ENCODE measurements at regions of chr1 and their contacts with region 1.

Region 1: DNA sequence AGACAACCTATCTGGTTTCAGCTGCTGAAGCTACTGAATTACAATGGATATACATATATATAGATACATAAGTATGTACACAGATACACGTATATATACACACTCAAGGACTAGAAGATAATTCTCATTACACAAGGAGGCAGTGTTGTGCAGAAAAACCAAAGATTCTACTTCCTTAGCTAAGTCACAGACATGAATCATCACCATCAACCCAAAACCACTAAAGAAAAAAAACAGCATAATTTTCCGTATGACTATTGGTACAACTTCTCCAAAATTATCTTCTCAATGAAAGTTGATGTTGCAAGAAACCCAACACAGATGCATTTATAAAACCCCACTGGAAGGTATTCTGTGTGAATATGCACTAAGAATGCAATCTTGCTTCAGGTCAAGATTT is 36.8 kb upstream of the RPF1 start:
- DNase-seq: no peak
- H3K4me3 Mint-ChIP-seq: no peak overlapping the region
- H3K27ac Mint-ChIP-seq: no peak overlapping the region
- H3K4me1 Mint-ChIP-seq: peaks cover 7% of the 10 kb centered on the region
- H3K27me3 Mint-ChIP-seq: peaks cover 12% of the 10 kb centered on the region

Region 2: DNA sequence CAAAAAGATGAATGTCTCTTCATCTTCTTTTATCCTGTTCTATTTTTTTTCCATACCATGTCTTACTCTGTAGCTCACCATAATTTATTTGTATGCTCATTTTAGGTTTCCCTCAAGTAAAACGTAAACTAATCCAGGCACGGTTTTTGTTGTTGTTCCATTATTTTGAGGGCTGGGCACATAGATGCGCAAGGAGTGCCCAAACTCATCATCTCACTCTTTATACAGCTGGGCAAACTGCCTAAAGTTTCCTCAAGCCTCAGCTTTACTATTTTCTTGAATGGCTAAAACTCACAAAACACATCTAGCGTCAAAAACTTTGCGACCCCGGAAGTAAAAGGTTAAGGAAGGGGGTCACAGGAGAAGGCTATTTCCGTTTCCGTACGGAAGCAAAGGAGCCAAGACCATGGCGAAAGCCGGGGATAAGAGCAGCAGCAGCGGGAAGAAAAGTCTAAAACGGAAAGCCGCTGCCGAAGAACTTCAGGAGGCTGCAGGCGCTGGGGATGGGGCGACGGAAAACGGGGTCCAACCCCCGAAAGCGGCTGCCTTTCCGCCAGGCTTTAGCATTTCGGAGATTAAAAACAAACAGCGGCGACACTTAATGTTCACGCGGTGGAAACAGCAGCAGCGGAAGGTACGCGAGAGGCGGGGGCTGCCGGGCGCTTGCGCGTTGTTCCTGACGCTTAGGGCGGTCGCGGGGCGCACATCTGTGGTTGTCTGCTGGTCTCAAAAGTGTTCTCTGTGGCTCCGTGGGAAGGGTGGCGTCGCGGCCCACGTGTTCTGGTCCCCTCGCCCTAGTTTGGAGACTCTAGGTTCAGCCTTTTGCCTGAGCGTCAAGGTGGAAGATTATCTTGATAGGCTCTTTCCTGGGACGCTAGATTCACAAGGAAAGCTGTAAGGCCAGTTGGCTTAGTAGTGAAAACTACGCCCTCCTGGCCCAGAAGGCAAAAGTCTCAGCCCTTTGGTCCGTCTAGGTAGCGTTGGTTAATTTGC is 36.9 kb after region 1 on chr1 and contains the start of gene RPF1:
- intact Hi-C with region 1: loop called (anchors 1 kb)
- DNase-seq: peak; percentile 71
- H3K4me3 Mint-ChIP-seq: peak within 1 kb of the TSS; percentile 99
- H3K27ac Mint-ChIP-seq: peak within 1 kb of the TSS; percentile 99
- H3K4me1 Mint-ChIP-seq: peaks cover 26% of the 10 kb centered on the region
- H3K27me3 Mint-ChIP-seq: peaks cover 26% of the 10 kb centered on the region
- total RNA-seq, gene RPF1: 58.9 and 62.7 TPM in 2 replicates

Region 3: GRCh38 chr1:84541679-84542078 is 99.4 kb after region 1 on chr1:
- intact Hi-C with region 1: loop called (anchors 2 kb)
- DNase-seq: no peak
- H3K4me3 Mint-ChIP-seq: no peak overlapping the region
- H3K27ac Mint-ChIP-seq: no peak overlapping the region
- H3K4me1 Mint-ChIP-seq: peaks cover 27% of the 10 kb centered on the region
- H3K27me3 Mint-ChIP-seq: no peaks in the 10 kb centered on the region

Region 4: GRCh38 chr1:84690397-84691121 is 248.3 kb after region 1 on chr1 and contains the start of gene SSX2IP:
- intact Hi-C with region 1: loop called (anchors 1 kb)
- DNase-seq: peak; percentile 98
- H3K4me3 Mint-ChIP-seq: peak within 1 kb of the TSS; percentile 94
- H3K27ac Mint-ChIP-seq: peak within 1 kb of the TSS; percentile 94
- H3K4me1 Mint-ChIP-seq: peaks cover 46% of the 10 kb centered on the region
- H3K27me3 Mint-ChIP-seq: no peaks in the 10 kb centered on the region
- total RNA-seq, gene SSX2IP: 12.1 and 13.0 TPM in 2 replicates

Region 5: DNA sequence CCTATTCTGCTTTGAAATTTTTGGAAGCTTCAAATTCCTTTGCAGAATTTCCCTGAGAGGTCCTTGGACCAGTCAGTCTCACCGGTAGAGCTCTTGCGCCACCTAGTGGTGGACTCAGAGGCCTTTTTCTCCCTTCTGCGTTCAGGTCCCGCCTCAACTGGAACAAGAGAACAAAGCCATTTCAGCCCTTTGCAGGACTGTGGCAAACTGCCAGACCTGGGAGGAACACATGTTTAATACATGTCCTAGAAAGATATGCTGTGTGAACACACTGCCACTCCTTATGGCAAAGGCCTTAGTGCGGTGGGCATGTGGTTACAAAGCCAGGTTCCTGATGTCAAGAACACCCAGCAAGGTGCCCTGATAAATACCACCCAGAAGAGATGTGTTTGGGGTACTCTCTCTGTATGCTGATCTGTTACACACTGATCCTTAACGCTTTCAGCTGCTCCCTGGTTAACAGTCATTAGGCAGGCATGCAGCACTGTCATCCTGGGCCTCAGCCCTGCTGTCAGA is 330.2 kb after region 1 on chr1:
- intact Hi-C with region 1: loop called (anchors 1 kb)
- DNase-seq: peak; percentile 30
- H3K4me3 Mint-ChIP-seq: no peak overlapping the region
- H3K27ac Mint-ChIP-seq: no peak overlapping the region
- H3K4me1 Mint-ChIP-seq: no peaks in the 10 kb centered on the region
- H3K27me3 Mint-ChIP-seq: peaks cover 24% of the 10 kb centered on the region

Region 6: GRCh38 chr1:85116856-85117255 is 674.6 kb after region 1 on chr1:
- intact Hi-C with region 1: no loop called
- DNase-seq: no peak
- H3K4me3 Mint-ChIP-seq: no peak overlapping the region
- H3K27ac Mint-ChIP-seq: no peak overlapping the region
- H3K4me1 Mint-ChIP-seq: peaks cover 5% of the 10 kb centered on the region
- H3K27me3 Mint-ChIP-seq: peaks cover 7% of the 10 kb centered on the region